ENCODE measurements at regions of chr15 and their contacts with region 1.

Region 1: DNA sequence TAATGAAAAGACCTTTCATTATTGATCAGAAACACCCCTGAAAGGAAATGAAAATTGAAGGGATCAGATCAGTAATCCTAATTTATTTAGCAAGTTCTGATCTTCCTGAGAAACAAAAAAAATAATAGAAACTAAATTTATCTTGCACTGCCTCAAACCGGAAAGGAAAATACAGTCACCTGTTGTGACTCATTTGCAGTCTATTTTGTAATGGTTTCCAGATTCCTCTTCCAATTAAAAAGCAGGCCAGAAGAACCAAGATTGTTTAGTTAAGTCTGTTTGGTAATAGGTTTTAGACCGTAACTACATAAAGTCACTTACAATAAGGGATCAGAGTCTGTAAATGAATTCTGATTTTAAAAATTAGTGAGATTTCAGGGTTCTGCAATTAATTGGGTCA is 49.7 kb upstream of the ATOSA start:
- DNase-seq: no peak
- ATAC-seq: no peak
- H3K4me3 ChIP-seq: no peak overlapping the region
- H3K27ac ChIP-seq: no peak overlapping the region
- H3K4me1 ChIP-seq: no peaks in the 10 kb centered on the region
- H3K27me3 ChIP-seq: no peaks in the 10 kb centered on the region
- CTCF ChIP-seq: no peak
- POLR2A ChIP-seq: no peak
- RAD21 ChIP-seq: no peak

Region 2: GRCh38 chr15:52651868-52652267 is 77.0 kb before region 1 on chr15:
- CTCF ChIA-PET with region 1: no interaction called
- POLR2A ChIA-PET with region 1: no interaction called
- RAD21 ChIA-PET with region 1: no interaction called
- intact Hi-C with region 1: no loop called
- DNase-seq: peak; percentile 32
- ATAC-seq: peak; percentile 100
- H3K4me3 ChIP-seq: peak overlapping the region; percentile 29 to 52
- H3K27ac ChIP-seq: no peak overlapping the region
- H3K4me1 ChIP-seq: peaks cover 0 to 8% of the 10 kb centered on the region in 2 experiments; a peak in 1 of 4 replicates
- H3K27me3 ChIP-seq: no peaks in the 10 kb centered on the region
- CTCF ChIP-seq: no peak
- POLR2A ChIP-seq: no peak
- RAD21 ChIP-seq: no peak

Region 3: DNA sequence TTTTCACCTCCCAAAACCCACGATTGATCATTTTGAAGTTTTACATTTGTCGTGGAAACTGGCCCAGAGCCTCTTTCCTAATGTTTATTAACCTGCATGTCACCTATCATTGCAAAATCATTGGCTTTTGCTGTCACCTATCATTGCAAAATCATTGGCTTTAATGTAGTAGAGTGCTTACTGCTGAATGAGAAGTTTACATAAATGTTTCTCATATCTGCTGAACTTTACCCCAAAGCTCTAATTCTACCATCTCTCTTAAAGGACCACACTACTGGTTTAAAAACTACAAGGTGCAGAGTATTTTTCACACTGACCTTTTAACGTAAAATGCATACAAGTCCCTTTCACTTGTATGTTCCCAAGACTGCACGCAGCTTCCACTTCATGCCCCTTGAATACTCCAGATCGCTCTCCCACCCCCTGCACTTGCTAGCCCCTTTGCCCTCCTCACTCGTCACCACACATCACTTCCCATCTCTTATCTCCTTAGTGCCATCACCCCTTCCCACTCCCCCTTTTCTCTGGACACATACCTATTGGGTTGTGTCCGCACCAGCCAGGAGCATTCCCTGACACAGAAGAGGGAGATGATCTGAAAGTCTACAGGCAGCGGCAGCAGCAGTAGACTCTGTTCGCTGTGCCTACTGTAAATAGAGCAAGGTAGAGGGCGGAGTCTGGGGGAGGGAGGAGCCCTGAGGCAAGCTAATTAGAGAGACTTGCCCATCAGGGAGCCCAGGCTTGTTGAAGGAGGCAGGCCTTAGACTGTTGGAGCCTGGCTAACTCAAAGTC is 19.5 kb before region 1 on chr15:
- CTCF ChIA-PET with region 1: no interaction called
- POLR2A ChIA-PET with region 1: no interaction called
- RAD21 ChIA-PET with region 1: no interaction called
- intact Hi-C with region 1: loop called (anchors 2 kb)
- DNase-seq: no peak
- ATAC-seq: peak; percentile 80
- H3K4me3 ChIP-seq: no peak overlapping the region
- H3K27ac ChIP-seq: no peak overlapping the region
- H3K4me1 ChIP-seq: 0 out of 4 replicates have a peak, but pooled peaks cover 0 to 3% of the 10 kb centered on the region in 2 experiments
- H3K27me3 ChIP-seq: 0 out of 2 replicates have a peak, but pooled peaks cover 5% of the 10 kb centered on the region
- CTCF ChIP-seq: no peak
- POLR2A ChIP-seq: no peak
- RAD21 ChIP-seq: no peak

Measured in HCT116 (cell line).